HEK293T (cell line): ENCODE measurements at regions of chr5 and their contacts with region 1.

Region 1: GRCh38 chr5:98796197-98796972 is 22.9 kb downstream of the RGMB start:
- DNase-seq: peak; percentile 58

Region 2: DNA sequence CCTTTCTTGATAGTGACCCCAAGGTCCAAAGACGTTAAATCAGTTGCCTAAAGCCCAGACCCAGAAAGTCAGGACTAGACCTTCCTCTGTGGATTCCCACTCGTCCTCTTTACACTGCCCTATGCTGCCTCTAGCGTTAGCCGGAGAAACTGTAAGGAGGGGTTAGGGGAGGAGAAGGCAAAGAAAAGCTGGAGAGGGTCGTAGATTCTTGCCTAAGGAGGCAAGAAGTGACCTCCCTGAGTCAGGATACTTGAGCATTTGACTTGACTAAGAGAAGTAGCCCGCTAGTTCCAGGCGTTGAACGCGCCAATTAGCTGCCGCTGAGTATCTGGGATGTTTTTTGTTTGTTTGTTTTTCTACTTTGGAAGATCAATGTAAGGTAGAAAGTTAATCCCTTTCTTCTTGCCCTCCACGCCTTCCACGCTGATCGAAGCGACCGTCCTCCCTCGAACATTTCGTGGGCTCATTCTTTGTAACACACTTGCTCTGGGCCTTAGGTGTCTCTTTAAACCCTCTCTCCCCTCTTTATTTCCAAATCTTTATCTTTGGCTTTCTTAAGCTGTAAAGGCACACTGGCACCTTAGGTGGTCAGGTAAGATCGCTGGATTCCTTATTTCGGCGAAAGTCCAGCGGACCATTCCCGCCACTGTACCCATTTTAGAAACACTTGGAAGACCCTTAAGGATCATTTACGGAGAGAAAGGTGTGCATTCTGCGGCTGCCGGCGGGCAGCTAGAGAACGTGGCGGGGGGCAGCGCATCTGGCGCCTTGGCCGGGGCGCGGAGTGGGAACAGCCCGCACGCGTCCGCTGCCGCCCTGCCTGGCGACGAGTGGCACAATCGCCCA is 28.0 kb before region 1 on chr5:
- CTCF ChIA-PET with region 1: interaction called, 56 read pairs
- POLR2A ChIA-PET with region 1: interaction called, 7 read pairs
- DNase-seq: peak; percentile 50

Region 3: GRCh38 chr5:98776066-98776705 is 20.2 kb before region 1 on chr5:
- CTCF ChIA-PET with region 1: interaction called, 56 read pairs
- POLR2A ChIA-PET with region 1: interaction called, 3 read pairs
- DNase-seq: no peak

Region 4: DNA sequence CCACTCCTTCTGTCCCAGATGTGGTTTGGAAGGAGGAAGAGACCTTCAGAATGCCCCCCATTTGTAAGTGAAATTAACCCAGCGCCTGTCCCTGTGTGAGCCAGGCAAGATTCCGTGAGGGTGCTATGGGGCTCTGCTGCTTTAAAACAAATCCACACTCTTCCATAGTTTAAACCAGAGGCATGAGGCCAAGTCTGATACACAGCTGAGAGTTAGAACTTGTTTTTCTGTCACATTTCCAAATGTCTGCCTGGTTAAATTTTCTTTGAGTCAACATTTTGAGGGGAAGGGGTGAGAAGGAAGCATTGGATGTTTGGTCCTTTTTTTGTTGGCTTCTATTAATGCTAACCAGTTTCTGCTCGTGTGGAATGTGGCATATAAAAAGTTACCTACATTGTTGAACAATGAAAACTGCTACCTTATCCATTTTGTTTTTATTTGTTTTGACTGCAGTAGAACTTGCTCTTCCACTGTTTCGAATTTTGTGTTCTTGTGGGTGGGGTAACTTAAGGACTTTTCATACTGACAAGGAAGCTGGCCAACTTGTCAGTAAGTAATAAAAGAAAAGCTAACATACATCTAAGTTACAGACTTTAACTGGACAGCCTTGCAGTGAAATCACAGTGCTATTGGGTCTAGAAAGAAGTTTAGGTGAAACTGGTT is 10.1 kb before region 1 on chr5:
- CTCF ChIA-PET with region 1: interaction called, 11 read pairs
- POLR2A ChIA-PET with region 1: no interaction called
- DNase-seq: no peak

Region 5: GRCh38 chr5:98839469-98840383 is 43.3 kb after region 1 on chr5:
- CTCF ChIA-PET with region 1: no interaction called
- POLR2A ChIA-PET with region 1: no interaction called
- DNase-seq: no peak